H1 (cell line): ENCODE measurements at regions of chr7 and their contacts with region 1.

Region 1: GRCh38 chr7:135620980-135621850 is 41.1 kb upstream of the STMP1 start:
- DNase-seq: peak in 1 of 2 experiments; percentile 1
- H3K4me3 ChIP-seq: no peak overlapping the region
- H3K27ac ChIP-seq: no peak overlapping the region
- H3K4me1 ChIP-seq: no peaks in the 10 kb centered on the region
- H3K27me3 ChIP-seq: no peaks in the 10 kb centered on the region
- CTCF ChIP-seq: peak in 2 of 3 experiments; percentile 39 to 70; a peak in 2 of 4 replicates
- EP300 ChIP-seq: no peak
- POLR2A ChIP-seq: no peak
- RAD21 ChIP-seq: peak; percentile 25 to 31; a peak in 3 of 4 replicates

Region 2: DNA sequence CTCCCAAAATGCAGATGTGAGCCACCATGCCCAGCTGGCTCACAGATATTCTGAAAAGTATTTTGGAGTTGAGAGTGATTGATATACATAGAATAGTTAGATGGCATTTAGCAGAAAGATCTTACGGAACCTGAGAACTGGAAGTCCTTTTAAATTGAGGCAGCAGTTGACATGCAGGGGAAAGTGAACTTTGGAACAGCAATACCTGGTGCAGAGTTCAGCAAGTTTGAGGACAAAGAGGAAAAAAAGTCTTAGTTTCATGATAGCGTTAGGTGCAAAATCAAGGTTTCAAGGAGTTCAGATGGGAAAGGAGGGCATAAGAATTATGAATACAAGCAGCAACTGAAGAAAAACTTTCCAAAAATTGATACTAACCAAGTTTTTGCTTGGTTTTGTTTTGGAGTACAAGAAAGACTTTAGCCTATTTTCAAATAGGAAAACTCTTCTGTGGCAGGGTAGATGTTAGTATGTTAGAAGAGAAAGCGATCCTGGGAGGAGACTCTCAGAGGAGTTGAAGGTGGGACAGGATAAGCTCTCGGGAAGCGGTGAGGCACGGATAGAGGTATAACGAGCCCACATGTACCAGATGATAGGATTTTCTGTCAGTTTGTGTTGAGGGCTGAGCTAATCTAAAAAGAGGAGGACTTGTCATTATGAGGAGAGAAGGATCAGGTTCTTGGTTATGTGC is 13.1 kb after region 1 on chr7:
- CTCF ChIA-PET with region 1: interaction called, 12 read pairs
- POLR2A ChIA-PET with region 1: interaction called, 3 read pairs
- DNase-seq: no peak
- H3K4me3 ChIP-seq: no peak overlapping the region
- H3K27ac ChIP-seq: no peak overlapping the region
- H3K4me1 ChIP-seq: no peaks in the 10 kb centered on the region
- H3K27me3 ChIP-seq: no peaks in the 10 kb centered on the region
- CTCF ChIP-seq: no peak
- EP300 ChIP-seq: no peak
- POLR2A ChIP-seq: no peak
- RAD21 ChIP-seq: no peak